ENCODE measurements at regions of chr2 and their contacts with region 1.

Region 1: GRCh38 chr2:54723131-54723995 is at the start of gene EML6:
- DNase-seq: peak; percentile 97
- H3K4me3 ChIP-seq: peak within 1 kb of the TSS; percentile 49 to 53
- H3K27ac ChIP-seq: peak within 1 kb of the TSS; percentile 55 to 60
- H3K4me1 ChIP-seq: no peaks in the 10 kb centered on the region
- H3K27me3 ChIP-seq: no peaks in the 10 kb centered on the region
- CTCF ChIP-seq: peak in 3 of 4 experiments; percentile 19 to 35 (median 21)
- POLR2A ChIP-seq: peak; percentile 44
- total RNA-seq, gene EML6: 0.46 to 10.7 TPM

Region 2: DNA sequence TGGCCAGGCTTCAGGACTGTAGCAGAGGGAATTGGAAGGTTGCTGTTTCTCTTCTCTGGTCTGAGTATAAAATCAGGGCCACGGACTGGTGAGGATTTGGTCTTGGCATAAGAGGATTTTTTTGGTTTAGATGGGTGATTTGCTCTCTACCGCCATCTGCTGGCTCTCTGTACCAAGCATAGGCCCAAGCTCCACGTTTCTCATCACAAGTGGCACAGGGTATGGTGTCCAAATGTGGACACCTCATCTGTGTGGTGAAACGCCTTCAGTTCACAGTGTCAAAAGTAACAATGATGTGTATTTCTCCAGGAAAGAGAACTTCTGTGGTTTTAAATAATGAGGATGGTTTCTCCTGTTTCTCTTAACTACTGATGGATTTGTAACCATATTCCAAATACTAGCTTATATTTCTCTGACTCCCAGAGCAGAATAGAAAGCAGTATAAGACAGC is 115.2 kb after region 1 on chr2:
- intact Hi-C with region 1: loop called (anchors 10 kb)
- DNase-seq: peak; percentile 54
- H3K4me3 ChIP-seq: no peak overlapping the region
- H3K27ac ChIP-seq: no peak overlapping the region
- H3K4me1 ChIP-seq: peaks cover 6% of the 10 kb centered on the region
- H3K27me3 ChIP-seq: no peaks in the 10 kb centered on the region
- CTCF ChIP-seq: peak; percentile 63 to 85 (median 76)
- POLR2A ChIP-seq: no peak

Region 3: DNA sequence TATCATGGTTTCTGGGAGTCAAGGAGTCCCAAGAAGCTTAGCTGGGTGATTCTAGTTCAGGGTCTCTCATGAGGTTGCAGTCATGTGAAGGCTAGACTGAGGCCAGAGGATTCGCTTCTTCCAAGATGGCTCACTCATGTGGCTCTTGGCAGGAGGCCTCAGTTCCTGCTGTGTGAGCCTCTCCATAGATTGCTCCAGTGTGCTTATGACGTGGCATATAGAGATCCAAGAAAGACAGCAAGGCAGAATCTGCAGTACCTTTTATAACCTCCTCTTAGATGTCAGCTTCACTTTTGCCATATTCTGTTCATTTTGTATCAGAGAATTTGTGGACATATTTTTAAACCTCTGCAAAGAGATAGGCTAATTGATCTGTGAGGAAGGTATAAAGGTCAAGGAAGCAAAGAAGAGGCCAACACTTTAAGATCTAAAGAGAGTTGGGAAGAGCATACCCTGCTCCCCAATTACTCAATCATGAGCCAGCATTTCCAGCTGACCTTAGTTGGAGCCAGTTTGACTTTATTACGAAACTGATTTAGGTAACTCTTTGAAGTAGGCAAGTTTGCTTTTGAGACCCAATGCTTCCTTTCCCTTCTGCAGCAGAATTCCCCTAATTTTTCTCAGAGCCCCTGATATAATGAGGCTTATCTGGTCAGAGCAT is 134.8 kb after region 1 on chr2:
- intact Hi-C with region 1: no loop called
- DNase-seq: no peak
- H3K4me3 ChIP-seq: no peak overlapping the region
- H3K27ac ChIP-seq: no peak overlapping the region
- H3K4me1 ChIP-seq: no peaks in the 10 kb centered on the region
- H3K27me3 ChIP-seq: no peaks in the 10 kb centered on the region
- CTCF ChIP-seq: no peak
- POLR2A ChIP-seq: no peak

Region 4: DNA sequence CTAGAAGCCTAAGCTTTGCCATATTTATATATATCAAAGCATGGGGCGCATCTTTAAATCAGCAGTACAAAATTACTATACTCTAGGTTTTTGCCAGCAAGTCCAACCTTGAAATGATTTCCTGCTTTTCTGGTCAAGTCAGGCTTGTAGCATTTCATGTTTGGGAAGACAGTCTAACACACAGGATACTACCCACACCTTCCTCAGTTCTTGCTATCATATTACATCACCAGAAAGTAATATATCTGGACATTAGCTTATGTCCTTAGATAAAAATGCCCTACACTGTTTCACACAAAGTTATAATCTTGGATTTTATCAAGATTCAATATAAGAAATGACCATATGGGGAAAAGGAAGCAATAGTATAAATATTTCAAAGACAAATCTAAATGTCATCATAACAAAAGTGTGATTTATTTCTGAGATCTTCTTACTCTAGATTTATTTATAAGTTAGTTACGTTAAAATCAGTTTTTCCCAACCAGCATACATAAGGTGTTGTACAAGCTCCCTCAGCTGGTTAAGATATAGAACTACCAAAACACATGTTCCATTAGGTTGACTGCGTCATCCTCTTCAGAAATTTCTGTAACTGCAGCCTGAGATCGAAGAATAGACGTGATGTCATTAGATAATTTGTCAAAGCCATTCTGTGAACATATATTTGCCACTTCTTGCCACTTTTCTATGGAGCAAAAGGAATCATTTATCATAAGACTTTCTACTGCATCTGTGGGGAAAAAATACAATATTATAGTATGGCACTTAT is 452.1 kb after region 1 on chr2:
- intact Hi-C with region 1: loop called (anchors 10 kb)
- DNase-seq: no peak
- H3K4me3 ChIP-seq: no peak overlapping the region
- H3K27ac ChIP-seq: no peak overlapping the region
- H3K4me1 ChIP-seq: no peaks in the 10 kb centered on the region
- H3K27me3 ChIP-seq: no peaks in the 10 kb centered on the region
- CTCF ChIP-seq: peak; percentile 11 to 83 (median 64)
- POLR2A ChIP-seq: no peak